Esophagus muscularis mucosa (tissue), 4 donors: ENCODE measurements at regions of chr3 and their contacts with region 1.

Region 1: DNA sequence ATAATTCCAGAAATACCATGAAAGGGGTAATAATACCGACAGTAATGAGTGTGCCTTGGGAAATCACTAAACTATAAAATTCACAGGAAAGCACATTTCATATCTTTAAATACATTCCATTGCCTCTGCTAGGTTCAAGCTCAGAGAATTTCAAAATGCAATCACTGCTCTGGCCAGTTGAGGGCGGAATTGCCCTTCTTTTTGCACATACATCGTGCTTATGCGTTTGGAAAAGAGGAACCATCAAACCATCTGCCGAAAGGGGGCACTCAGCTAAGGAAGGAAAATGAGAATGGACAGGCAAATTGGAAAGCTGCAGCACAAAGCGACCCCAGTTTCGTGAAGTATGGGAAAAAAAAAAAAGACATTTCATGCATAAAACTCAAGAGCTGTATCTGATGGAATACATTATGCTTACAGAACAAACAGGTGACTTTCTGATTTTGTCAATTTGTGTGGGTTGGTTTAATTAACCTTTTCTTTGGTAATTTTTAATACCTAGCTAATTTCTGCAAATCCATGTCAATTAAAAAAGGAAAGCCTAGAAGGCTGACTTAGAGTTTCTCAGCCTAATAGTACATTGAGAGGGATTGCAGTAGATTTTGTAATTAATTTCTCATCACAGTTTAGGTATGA is 61.4 kb downstream of the TUSC7 start:
- DNase-seq: no peak
- H3K4me3 ChIP-seq: no peak overlapping the region
- H3K27ac ChIP-seq: no peak overlapping the region
- H3K4me1 ChIP-seq: no peaks in the 10 kb centered on the region
- H3K27me3 ChIP-seq: no peaks in the 10 kb centered on the region
- CTCF ChIP-seq: peak; percentile 75 to 87 (median 79)
- EP300 ChIP-seq: no peak
- POLR2A ChIP-seq: no peak

Region 2: DNA sequence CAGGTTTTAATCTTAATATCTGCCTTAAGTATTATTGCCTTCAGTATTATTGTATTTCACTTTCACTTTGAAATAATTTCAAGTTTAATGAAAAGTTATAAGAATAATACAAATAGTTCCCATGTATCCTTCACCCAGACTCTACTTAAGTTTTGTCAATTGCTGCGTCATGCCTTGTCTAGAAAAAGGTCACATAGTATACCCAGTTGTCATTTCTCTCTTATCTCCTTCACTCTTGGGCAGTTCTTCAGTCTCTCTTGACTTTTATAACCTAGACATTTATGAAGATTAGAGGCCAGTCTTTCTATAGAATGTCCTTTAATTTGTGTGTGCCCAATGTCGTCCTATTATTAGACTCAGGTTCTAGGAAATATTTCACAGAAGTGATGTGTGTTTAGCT is 693.4 kb before region 1 on chr3:
- intact Hi-C with region 1: no loop called
- DNase-seq: no peak
- H3K4me3 ChIP-seq: no peak overlapping the region
- H3K27ac ChIP-seq: no peak overlapping the region
- H3K4me1 ChIP-seq: no peaks in the 10 kb centered on the region
- H3K27me3 ChIP-seq: no peaks in the 10 kb centered on the region
- CTCF ChIP-seq: no peak
- EP300 ChIP-seq: no peak
- POLR2A ChIP-seq: no peak

Region 3: GRCh38 chr3:116667791-116668190 is 103.1 kb before region 1 on chr3:
- intact Hi-C with region 1: no loop called
- DNase-seq: no peak
- H3K4me3 ChIP-seq: no peak overlapping the region
- H3K27ac ChIP-seq: no peak overlapping the region
- H3K4me1 ChIP-seq: no peaks in the 10 kb centered on the region
- H3K27me3 ChIP-seq: no peaks in the 10 kb centered on the region
- CTCF ChIP-seq: no peak
- EP300 ChIP-seq: no peak
- POLR2A ChIP-seq: no peak

Region 4: DNA sequence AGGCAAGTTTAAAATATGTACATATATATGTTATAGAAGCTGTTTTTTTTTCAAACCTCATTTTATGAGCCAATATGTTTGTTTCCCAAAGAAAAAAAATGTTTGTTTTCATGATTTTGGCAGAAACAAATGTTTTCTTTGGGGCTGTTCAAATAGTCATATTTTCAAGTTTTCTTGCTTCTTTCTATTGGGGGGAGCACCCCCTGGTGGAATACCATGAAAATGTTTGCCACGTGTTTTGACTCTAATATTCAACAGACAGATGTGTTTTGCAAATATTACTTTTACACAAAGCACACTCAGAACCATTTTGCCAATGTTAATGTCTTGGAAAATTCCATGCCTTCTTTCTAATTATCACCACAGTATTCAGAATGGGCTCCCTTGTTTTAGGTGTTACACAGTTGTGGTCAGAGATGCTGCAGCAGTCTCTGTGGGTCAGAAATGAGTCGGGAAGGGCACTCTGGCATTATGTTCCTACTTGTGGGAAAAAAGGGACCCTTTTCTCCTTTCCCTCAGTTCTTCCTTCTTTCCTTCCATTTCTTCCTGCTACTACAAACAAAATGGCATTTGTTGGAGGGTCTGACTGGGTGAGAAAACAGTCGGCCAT is 755.6 kb after region 1 on chr3:
- intact Hi-C with region 1: loop called (anchors 10 kb)
- DNase-seq: no peak
- H3K4me3 ChIP-seq: no peak overlapping the region
- H3K27ac ChIP-seq: no peak overlapping the region
- H3K4me1 ChIP-seq: peaks cover 0 to 8% (median 5%) of the 10 kb centered on the region in 4 donors
- H3K27me3 ChIP-seq: no peaks in the 10 kb centered on the region
- CTCF ChIP-seq: peak; percentile 20 to 51 (median 46)
- EP300 ChIP-seq: no peak
- POLR2A ChIP-seq: no peak

Region 5: DNA sequence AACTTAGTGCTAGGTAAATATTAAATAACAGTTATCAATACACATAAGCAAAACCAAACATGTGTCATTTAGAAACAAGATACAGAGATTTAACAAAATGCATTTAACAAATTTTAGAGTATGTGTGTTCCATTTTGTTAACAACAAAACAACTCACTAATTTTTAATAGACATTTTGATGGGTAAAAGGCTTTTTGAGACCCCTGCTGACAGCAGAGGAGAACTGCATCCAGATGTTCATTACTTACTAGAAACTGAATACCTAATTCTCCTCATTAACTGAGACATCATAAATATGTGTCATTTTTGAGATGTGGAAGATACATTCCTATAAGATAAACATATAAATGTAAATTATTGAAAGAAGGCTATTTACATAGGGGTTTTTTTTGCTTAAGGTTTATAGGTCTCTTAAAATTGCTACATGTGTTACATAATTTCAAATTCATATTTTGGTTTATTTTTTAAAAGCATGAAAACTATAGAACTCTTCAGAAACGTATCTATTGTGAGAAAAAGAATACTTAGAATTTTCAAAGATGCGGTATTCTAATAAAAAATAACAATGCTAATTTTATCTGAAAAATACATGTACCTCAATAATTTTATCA is 948.5 kb after region 1 on chr3:
- intact Hi-C with region 1: loop called (anchors 5 kb)
- DNase-seq: no peak
- H3K4me3 ChIP-seq: no peak overlapping the region
- H3K27ac ChIP-seq: no peak overlapping the region
- H3K4me1 ChIP-seq: no peaks in the 10 kb centered on the region
- H3K27me3 ChIP-seq: no peaks in the 10 kb centered on the region
- CTCF ChIP-seq: peak; percentile 44 to 74 (median 60)
- EP300 ChIP-seq: no peak
- POLR2A ChIP-seq: no peak